Right ventricle myocardium inferior (tissue), 1 donor: ENCODE measurements at regions of chr17 and their contacts with region 1.

Region 1: DNA sequence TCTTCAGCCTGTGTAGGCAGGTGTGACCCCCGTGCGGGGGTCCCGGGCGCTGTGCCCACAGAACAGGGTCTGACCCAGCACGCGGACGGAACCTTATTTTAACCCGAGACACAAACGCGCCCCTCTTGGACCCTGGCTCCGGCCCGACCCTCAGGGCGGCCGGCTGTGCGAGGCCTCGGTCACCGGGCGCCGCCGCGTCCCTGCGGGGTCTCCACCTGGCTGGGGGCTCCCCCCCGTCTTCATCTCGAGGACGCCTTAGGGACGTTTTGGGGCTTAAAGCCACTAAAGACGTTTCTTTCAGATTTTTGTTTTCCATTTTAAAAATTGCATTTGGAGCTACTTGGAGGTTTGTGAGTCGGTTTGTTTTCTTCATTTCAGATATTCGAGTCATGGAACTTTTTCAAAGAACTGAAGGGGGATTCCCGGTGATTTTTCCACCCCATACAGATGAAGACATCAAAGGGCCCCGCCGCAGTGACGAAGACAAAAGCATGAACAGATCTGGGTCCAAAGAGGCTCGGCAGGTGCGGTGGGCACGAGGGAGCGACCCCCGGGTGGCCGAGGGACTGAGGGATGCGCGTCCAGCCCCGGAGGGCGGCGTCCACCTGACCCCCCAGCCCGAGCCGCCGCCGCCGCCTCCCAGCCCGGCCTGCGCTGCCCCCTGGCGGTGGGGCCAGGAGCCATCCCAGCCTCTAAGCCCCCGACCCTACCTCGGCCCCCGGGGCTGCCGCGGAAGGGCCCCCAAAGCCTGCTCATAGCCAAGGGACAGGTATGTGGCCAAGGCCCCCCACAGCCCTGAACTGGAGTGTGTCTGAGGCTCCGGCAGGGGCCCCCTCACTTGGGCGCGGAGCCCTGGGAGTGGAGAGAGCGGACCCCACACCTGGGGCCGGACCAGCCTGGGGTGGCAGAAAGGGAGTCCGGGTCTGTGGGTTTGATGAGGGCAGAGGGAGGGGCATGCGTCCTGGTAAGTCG is 3.8 kb upstream of the CD7 start:
- DNase-seq: no peak
- ATAC-seq: no peak

Region 2: GRCh38 chr17:82205719-82206508 is 115.3 kb before region 1 on chr17:
- intact Hi-C with region 1: loop called (anchors 1 kb)
- DNase-seq: peak; percentile 92
- ATAC-seq: peak; percentile 87

Region 3: GRCh38 chr17:82236142-82236981 is 84.9 kb before region 1 on chr17:
- intact Hi-C with region 1: loop called (anchors 2 kb)
- DNase-seq: peak; percentile 84
- ATAC-seq: peak; percentile 2

Region 4: GRCh38 chr17:82384730-82385481 is 63.7 kb after region 1 on chr17:
- intact Hi-C with region 1: no loop called
- DNase-seq: peak; percentile 84
- ATAC-seq: peak; percentile 85